Astrocyte of the cerebellum (primary cell): ENCODE measurements at regions of chr9 and their contacts with region 1.

Region 1: GRCh38 chr9:134443168-134444037 is 117.1 kb downstream of the RXRA start:
- DNase-seq: peak; percentile 81
- H3K4me3 ChIP-seq: no peak overlapping the region
- CTCF ChIP-seq: peak; percentile 97

Region 2: GRCh38 chr9:134185536-134186011 is 257.8 kb before region 1 on chr9:
- in situ Hi-C with region 1: loop called (anchors 5 kb)
- DNase-seq: no peak
- H3K4me3 ChIP-seq: no peak overlapping the region
- CTCF ChIP-seq: no peak

Region 3: GRCh38 chr9:134358662-134359319 is 84.6 kb before region 1 on chr9:
- in situ Hi-C with region 1: loop called (anchors 5 kb)
- DNase-seq: no peak
- H3K4me3 ChIP-seq: no peak overlapping the region
- CTCF ChIP-seq: no peak

Region 4: GRCh38 chr9:134602547-134603309 is 159.3 kb after region 1 on chr9:
- in situ Hi-C with region 1: no loop called
- DNase-seq: peak; percentile 99
- H3K4me3 ChIP-seq: no peak overlapping the region
- CTCF ChIP-seq: no peak

Region 5: DNA sequence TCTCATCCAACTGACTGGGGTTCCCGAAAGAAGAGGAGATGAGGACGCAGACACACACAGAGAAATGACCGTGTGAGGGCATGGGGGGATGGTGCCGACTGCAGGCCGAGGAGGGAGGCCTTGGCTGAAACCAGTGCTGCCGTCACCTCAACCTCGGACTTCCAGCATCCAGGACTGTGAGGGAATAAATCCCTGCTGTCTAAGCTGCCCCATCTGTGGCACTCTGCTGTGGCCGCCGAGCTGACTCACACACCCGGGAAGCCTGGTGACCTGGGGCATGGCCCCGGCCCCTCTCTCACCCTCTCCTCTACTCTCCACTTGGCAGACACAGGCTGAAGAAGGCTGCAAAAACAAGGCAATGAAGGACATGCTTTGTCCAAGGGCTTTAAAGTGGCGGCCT is 193.8 kb after region 1 on chr9:
- in situ Hi-C with region 1: loop called (anchors 5 kb)
- DNase-seq: no peak
- H3K4me3 ChIP-seq: no peak overlapping the region
- CTCF ChIP-seq: peak; percentile 46

Region 6: GRCh38 chr9:134689321-134690181 is 246.1 kb after region 1 on chr9:
- in situ Hi-C with region 1: loop called (anchors 5 kb)
- DNase-seq: no peak
- H3K4me3 ChIP-seq: no peak overlapping the region
- CTCF ChIP-seq: peak; percentile 89